ENCODE measurements at regions of chr2 and their contacts with region 1.

Region 1: DNA sequence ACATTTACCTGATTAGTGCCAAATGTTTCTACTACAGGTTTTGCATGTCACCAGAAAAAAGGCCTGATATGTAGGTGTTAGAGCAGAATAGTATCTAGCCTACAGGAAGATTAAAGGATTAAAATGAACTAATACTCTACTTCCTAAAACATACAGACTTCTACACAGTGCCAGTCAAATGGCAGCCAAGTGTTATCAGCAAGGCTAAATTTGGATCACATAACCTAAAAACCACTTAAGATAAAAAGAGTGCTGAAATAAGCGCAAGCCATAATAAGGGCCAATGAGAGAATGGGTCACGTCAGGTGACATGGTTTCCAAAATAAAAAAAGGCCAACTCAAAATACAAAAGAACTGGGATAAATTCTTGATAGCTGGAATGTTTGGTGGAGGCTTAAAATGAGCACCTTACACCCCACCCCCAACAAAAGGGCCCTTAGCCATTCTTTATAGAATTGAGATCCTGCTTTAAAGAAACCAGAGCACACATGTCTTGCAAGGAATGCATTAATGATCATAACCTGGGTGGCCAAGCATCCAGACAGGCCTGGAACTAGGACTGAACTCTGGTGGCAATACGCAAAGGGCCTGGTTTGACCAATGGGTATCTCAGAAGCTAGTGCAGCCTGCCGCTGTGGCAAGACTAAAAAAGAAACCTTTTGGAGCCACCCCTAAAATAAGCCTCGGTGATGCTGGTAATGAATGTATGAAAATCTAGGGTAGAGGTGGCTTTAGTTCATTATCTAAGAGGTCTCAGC is 32.4 kb downstream of the IRS1 start:
- DNase-seq: no peak
- ATAC-seq: no peak
- H3K4me3 ChIP-seq: no peak overlapping the region
- H3K4me3 Mint-ChIP-seq: no peak overlapping the region
- H3K27ac ChIP-seq: no peak overlapping the region
- H3K27ac Mint-ChIP-seq: no peak overlapping the region
- H3K4me1 ChIP-seq: peaks cover 0 to 4% of the 10 kb centered on the region in 2 experiments
- H3K4me1 Mint-ChIP-seq: peaks cover 10 to 19% (median 14%) of the 10 kb centered on the region in 3 donors
- H3K27me3 ChIP-seq: no peaks in the 10 kb centered on the region
- H3K27me3 Mint-ChIP-seq: no peaks in the 10 kb centered on the region

Region 2: DNA sequence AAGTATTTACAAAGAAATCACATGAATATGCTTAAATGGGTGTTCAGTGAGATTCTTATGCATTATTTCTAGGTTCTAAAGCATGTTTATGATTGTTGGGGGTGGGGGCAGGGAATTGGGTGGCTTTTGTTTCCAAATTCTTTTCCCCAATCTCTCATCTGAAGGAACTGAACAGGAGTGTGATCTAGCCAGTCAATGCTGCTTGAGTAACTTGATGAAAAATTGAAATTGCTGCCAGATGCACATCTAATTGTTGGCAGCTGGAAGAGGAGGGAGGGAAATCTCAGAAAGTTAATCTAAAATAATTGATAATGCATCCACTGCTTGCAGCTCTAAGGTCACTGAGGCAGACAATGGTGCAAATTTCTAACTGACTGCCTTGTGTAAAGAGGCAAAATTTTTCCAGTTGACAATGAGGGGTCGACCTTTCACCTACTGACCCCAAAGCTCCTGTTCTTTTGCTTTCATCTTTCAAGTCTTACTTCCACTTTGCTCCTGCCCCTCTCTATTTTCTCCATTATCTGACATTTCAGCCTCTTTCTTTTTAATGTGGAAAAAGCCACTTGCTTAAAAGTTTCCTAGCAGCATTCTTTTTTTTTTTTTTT is 20.9 kb before region 1 on chr2:
- CTCF ChIA-PET with region 1: interaction called, 3 to 10 read pairs
- POLR2A ChIA-PET with region 1: no interaction called
- DNase-seq: no peak
- ATAC-seq: no peak
- H3K4me3 ChIP-seq: no peak overlapping the region
- H3K4me3 Mint-ChIP-seq: no peak overlapping the region
- H3K27ac ChIP-seq: no peak overlapping the region
- H3K27ac Mint-ChIP-seq: no peak overlapping the region
- H3K4me1 ChIP-seq: no peaks in the 10 kb centered on the region
- H3K4me1 Mint-ChIP-seq: peaks cover 0 to 2% (median 0%) of the 10 kb centered on the region in 3 donors
- H3K27me3 ChIP-seq: no peaks in the 10 kb centered on the region
- H3K27me3 Mint-ChIP-seq: no peaks in the 10 kb centered on the region

Region 3: GRCh38 chr2:226818930-226819329 is 51.7 kb after region 1 on chr2:
- CTCF ChIA-PET with region 1: no interaction called
- POLR2A ChIA-PET with region 1: no interaction called
- DNase-seq: no peak
- ATAC-seq: no peak
- H3K4me3 ChIP-seq: no peak overlapping the region
- H3K4me3 Mint-ChIP-seq: no peak overlapping the region
- H3K27ac ChIP-seq: no peak overlapping the region
- H3K27ac Mint-ChIP-seq: no peak overlapping the region
- H3K4me1 ChIP-seq: no peaks in the 10 kb centered on the region
- H3K4me1 Mint-ChIP-seq: no peaks in the 10 kb centered on the region
- H3K27me3 ChIP-seq: peaks cover 2 to 3% of the 10 kb centered on the region in 2 experiments
- H3K27me3 Mint-ChIP-seq: peaks cover 4 to 15% of the 10 kb centered on the region in 2 donors

Measured in T-cell (primary cell).